ENCODE measurements at regions of chr14 and their contacts with region 1.

Region 1: GRCh38 chr14:91060351-91061055 is at the start of gene RPS6KA5:
- DNase-seq: peak; percentile 100
- H3K4me3 ChIP-seq: peak within 1 kb of the TSS; percentile 80 to 82
- H3K27ac ChIP-seq: peak within 1 kb of the TSS; percentile 95 to 99
- H3K4me1 ChIP-seq: no peaks in the 10 kb centered on the region
- H3K27me3 ChIP-seq: no peaks in the 10 kb centered on the region
- CTCF ChIP-seq: peak in 2 of 4 experiments; percentile 57
- POLR2A ChIP-seq: peak; percentile 96
- total RNA-seq, gene RPS6KA5: 8.9 to 10.3 TPM

Region 2: GRCh38 chr14:90903101-90903500 is 157.4 kb before region 1 on chr14:
- intact Hi-C with region 1: loop called (anchors 5 kb)
- DNase-seq: peak; percentile 44
- H3K4me3 ChIP-seq: no peak overlapping the region
- H3K27ac ChIP-seq: no peak overlapping the region
- H3K4me1 ChIP-seq: no peaks in the 10 kb centered on the region
- H3K27me3 ChIP-seq: no peaks in the 10 kb centered on the region
- CTCF ChIP-seq: peak in 3 of 4 experiments; percentile 64 to 82 (median 76)
- POLR2A ChIP-seq: no peak

Region 3: DNA sequence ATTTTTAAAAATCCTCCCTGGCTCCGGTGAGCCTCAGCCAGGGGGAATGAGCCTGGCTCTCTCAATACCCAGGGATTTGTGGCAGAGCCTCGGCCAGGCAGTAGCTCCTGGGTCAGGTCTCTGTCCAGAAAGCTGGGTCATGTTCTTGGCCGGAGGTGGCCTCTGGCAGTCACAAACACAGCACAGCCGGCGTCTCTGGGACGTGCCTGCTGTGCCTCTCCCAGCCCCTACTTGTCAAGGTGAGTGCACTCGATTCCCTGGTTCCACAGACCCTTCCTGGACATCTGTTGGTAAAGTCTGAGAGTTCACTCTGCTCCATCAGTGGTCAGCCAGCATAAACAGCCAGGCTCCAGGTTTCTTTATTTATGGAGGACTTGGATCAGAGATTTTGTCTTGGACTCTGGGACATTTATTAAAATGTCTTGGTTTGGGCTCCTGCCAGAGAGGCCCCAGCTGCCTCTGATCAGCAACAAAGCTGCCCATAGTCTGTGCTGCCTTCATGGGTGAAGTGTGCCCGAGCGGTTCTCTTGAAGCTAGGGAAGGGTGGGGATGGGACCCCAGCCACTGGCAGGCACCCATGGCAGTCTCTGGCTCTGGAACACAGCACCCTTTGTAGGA is 110.1 kb after region 1 on chr14:
- intact Hi-C with region 1: loop called (anchors 2 kb)
- DNase-seq: no peak
- H3K4me3 ChIP-seq: no peak overlapping the region
- H3K27ac ChIP-seq: peak overlapping the region; percentile 41 to 42
- H3K4me1 ChIP-seq: peaks cover 10% of the 10 kb centered on the region
- H3K27me3 ChIP-seq: no peaks in the 10 kb centered on the region
- CTCF ChIP-seq: no peak
- POLR2A ChIP-seq: no peak

Region 4: GRCh38 chr14:91286530-91286937 is 226.0 kb after region 1 on chr14:
- intact Hi-C with region 1: loop called (anchors 10 kb)
- DNase-seq: peak; percentile 75
- H3K4me3 ChIP-seq: no peak overlapping the region
- H3K27ac ChIP-seq: no peak overlapping the region
- H3K4me1 ChIP-seq: no peaks in the 10 kb centered on the region
- H3K27me3 ChIP-seq: no peaks in the 10 kb centered on the region
- CTCF ChIP-seq: peak; percentile 91 to 97 (median 92)
- POLR2A ChIP-seq: no peak